CD4-positive, alpha-beta memory T cell (primary cell): ENCODE measurements at regions of chr1 and their contacts with region 1.

Region 1: DNA sequence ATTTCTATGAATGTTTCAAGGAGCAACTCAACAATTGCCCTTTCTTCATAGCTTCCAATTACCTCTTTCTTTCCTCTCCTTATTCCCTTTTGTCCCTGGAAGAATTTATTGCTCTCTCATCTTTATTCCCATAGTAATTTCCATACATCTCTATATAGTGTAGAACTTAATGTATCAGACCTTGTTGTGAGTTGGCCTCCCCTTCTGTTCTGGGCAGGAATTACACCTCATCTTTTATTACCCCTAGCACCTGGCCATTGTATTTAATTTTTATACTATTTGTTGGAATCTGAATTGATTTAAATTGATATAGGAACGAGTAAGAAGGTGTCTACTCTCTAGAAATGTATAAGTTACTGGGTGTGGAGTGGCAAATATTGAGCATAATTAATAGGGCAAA is 114.5 kb downstream of the CACHD1 start:
- DNase-seq: no peak
- H3K4me3 ChIP-seq: no peak overlapping the region
- H3K4me3 Mint-ChIP-seq: no peak overlapping the region
- H3K27ac ChIP-seq: no peak overlapping the region
- H3K27ac Mint-ChIP-seq: no peak overlapping the region
- H3K4me1 ChIP-seq: no peaks in the 10 kb centered on the region
- H3K4me1 Mint-ChIP-seq: no peaks in the 10 kb centered on the region
- H3K27me3 ChIP-seq: peaks cover 4% of the 10 kb centered on the region
- H3K27me3 Mint-ChIP-seq: peaks cover 0 to 4% of the 10 kb centered on the region in 2 donors

Region 2: GRCh38 chr1:64268653-64269557 is 315.6 kb before region 1 on chr1:
- CTCF ChIA-PET with region 1: interaction called, 4 read pairs
- POLR2A ChIA-PET with region 1: no interaction called
- intact Hi-C with region 1: loop called (anchors 10 kb)
- DNase-seq: peak; percentile 47 to 62 (median 54)
- H3K4me3 ChIP-seq: no peak overlapping the region
- H3K4me3 Mint-ChIP-seq: no peak overlapping the region
- H3K27ac ChIP-seq: no peak overlapping the region
- H3K27ac Mint-ChIP-seq: peak overlapping the region in 1 of 7 donors; percentile 26
- H3K4me1 ChIP-seq: no peaks in the 10 kb centered on the region
- H3K4me1 Mint-ChIP-seq: no peaks in the 10 kb centered on the region
- H3K27me3 ChIP-seq: peaks cover 4% of the 10 kb centered on the region
- H3K27me3 Mint-ChIP-seq: peaks cover 9 to 22% of the 10 kb centered on the region in 2 donors

Region 3: GRCh38 chr1:64572222-64572900 is 12.1 kb before region 1 on chr1:
- CTCF ChIA-PET with region 1: no interaction called
- POLR2A ChIA-PET with region 1: no interaction called
- intact Hi-C with region 1: no loop called
- DNase-seq: no peak
- H3K4me3 ChIP-seq: no peak overlapping the region
- H3K4me3 Mint-ChIP-seq: no peak overlapping the region
- H3K27ac ChIP-seq: no peak overlapping the region
- H3K27ac Mint-ChIP-seq: no peak overlapping the region
- H3K4me1 ChIP-seq: no peaks in the 10 kb centered on the region
- H3K4me1 Mint-ChIP-seq: no peaks in the 10 kb centered on the region
- H3K27me3 ChIP-seq: no peaks in the 10 kb centered on the region
- H3K27me3 Mint-ChIP-seq: peaks cover 3 to 8% of the 10 kb centered on the region in 2 donors